Activated T-helper 1 cell treated with anti-CD3 and anti-CD28 coated beads, Interleukin-12 subunit alpha, Interleukin-12 subunit beta, Interleukin-2, Interleukin-4 antibody, amounts not matched to agents 30 ng/mL and 10 ng/mL and 1 ng/mL, durations not matched to agents 14 hours and 24 hours and 36 hours (primary cell): ENCODE measurements at regions of chr2 and their contacts with region 1.

Region 1: GRCh38 chr2:42095923-42096408 is 48.1 kb downstream of the PKDCC start:
- DNase-seq: peak; percentile 46
- H3K4me3 Mint-ChIP-seq: no peak overlapping the region
- H3K27ac Mint-ChIP-seq: no peak overlapping the region
- H3K4me1 Mint-ChIP-seq: peaks cover 46% of the 10 kb centered on the region
- H3K27me3 Mint-ChIP-seq: peaks cover 18% of the 10 kb centered on the region

Region 2: DNA sequence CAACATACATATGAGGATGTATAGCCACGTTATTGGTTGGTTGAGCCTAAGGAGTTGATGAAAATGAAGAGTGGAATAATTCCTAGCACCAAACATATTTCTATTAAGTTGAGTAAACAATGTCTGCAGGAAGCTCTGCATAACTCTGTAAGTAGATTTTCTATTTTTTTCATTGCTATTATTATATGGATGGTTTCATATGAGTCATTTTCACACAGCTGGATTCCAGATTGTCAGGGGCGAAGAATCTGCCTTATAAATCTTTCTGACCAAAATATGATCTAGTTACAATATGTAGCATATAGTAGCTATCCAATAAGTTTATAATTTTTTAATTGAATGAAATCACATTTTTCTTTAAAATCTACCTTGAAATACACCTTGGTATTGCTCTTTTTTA is 516.2 kb before region 1 on chr2:
- intact Hi-C with region 1: no loop called
- DNase-seq: no peak
- H3K4me3 Mint-ChIP-seq: no peak overlapping the region
- H3K27ac Mint-ChIP-seq: no peak overlapping the region
- H3K4me1 Mint-ChIP-seq: no peaks in the 10 kb centered on the region
- H3K27me3 Mint-ChIP-seq: no peaks in the 10 kb centered on the region

Region 3: DNA sequence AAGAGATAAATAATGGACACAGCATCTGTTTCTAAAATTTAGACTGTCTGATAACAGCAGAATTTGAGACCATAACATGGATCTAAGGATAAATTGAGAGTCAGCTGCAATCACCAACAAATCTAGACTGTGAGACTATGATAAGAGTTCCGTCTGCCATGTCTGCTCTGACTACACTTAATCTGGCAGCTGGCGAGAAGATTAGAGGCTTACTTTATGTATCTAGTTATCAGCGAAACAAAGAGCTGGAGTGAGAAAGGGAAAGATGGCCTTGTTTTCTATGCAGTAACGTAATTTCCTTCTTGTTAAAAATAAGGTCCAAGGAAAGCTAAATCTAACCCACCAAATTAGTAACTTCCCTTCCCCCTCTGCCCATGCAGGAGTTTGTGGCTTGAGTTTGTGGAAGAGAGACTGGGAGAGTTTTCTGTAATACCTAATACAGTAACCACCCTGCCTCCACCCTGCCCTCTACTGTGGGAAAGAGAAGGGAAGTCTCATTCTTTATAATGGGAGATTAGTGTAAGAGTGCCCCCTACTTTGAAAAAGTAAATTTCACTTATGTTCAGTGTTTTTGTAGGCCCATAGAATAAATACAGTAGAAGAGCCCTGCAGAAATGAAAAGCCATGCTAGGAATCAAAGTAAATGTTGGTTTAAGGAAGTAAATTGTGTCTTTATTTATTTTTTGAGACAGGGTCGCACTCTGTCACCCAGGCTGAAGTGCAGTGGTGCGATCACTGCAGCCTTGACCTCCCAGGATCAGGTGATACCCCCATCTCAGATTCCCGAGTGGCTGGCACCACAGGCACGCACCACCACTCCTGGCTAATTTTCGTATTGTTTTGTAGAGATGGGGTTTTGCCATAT is 100.7 kb after region 1 on chr2:
- intact Hi-C with region 1: loop called (anchors 1 kb)
- DNase-seq: peak; percentile 11
- H3K4me3 Mint-ChIP-seq: no peak overlapping the region
- H3K27ac Mint-ChIP-seq: no peak overlapping the region
- H3K4me1 Mint-ChIP-seq: peaks cover 61% of the 10 kb centered on the region
- H3K27me3 Mint-ChIP-seq: no peaks in the 10 kb centered on the region

Region 4: DNA sequence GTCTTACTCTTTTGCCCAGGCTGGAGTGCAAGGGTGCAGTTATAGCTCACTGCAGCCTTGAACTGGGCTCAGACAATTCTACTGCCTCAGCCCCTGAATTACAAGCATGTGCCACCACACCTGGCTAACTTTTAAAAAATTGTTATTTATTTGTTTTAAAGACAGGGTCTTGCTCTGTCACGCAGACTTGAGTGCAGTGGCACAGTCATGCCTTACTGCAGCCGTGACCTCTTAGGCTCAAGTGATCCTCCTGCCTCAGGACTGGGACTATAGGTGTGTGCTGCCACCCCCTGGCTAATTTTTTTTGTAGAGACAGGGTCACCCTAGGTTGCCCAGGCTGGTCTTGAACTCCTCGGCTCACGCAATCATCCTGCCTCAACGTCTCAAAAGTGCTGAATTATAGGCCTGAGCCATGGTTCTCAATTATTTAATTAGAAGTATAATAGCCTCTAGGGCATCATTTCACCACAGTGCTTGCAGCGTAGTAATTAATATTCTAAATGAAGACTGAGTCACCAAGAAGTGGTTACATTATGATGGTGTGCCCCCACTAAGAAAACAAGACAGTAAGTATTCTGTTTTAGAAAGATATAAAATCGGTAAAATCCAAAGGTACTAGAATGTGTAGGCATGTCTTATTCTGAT is 142.8 kb after region 1 on chr2:
- intact Hi-C with region 1: loop called (anchors 1 kb)
- DNase-seq: no peak
- H3K4me3 Mint-ChIP-seq: no peak overlapping the region
- H3K27ac Mint-ChIP-seq: no peak overlapping the region
- H3K4me1 Mint-ChIP-seq: peaks cover 24% of the 10 kb centered on the region
- H3K27me3 Mint-ChIP-seq: no peaks in the 10 kb centered on the region

Region 5: GRCh38 chr2:42328148-42328833 is 232.3 kb after region 1 on chr2:
- intact Hi-C with region 1: loop called (anchors 1 kb)
- DNase-seq: no peak
- H3K4me3 Mint-ChIP-seq: no peak overlapping the region
- H3K27ac Mint-ChIP-seq: peak overlapping the region; percentile 40
- H3K4me1 Mint-ChIP-seq: peaks cover 28% of the 10 kb centered on the region
- H3K27me3 Mint-ChIP-seq: no peaks in the 10 kb centered on the region

Region 6: GRCh38 chr2:42494355-42495233 is 398.6 kb after region 1 on chr2:
- intact Hi-C with region 1: loop called (anchors 5 kb)
- DNase-seq: peak; percentile 57
- H3K4me3 Mint-ChIP-seq: peak overlapping the region; percentile 89
- H3K27ac Mint-ChIP-seq: peak overlapping the region; percentile 82
- H3K4me1 Mint-ChIP-seq: peaks cover 9% of the 10 kb centered on the region
- H3K27me3 Mint-ChIP-seq: peaks cover 40% of the 10 kb centered on the region